ENCODE measurements at regions of chr1 and their contacts with region 1.

Region 1: DNA sequence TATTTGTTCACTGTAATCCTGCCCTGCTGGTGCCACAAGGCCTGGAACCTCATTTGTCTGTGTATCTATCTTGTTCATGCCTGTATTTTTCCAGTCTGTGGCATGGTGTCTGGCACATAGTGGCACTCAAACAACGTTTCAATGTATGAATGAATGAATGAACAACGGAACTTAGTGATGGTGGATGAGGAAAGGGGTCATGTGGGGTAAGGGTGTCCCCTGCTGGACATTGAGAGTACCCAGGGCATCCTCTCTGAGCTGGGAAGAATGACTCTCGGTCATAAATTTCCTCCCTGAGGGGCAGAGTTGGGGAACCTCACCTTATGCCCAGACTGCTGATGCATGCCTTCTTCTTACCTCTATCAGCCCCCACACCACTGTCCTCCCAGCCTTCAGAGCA is 18.9 kb upstream of the ZNF683 start:
- DNase-seq: peak; percentile 64
- ATAC-seq: peak; percentile 75
- H3K4me3 ChIP-seq: no peak overlapping the region
- H3K27ac ChIP-seq: no peak overlapping the region
- H3K4me1 ChIP-seq: peaks cover 17 to 23% of the 10 kb centered on the region in 2 experiments
- H3K27me3 ChIP-seq: peaks cover 14% of the 10 kb centered on the region; the same call in 1 of the 2 replicates
- CTCF ChIP-seq: peak; percentile 90 to 92 (median 91)
- POLR2A ChIP-seq: no peak
- RAD21 ChIP-seq: peak; percentile 99

Region 2: GRCh38 chr1:26035959-26036755 is 355.3 kb before region 1 on chr1:
- CTCF ChIA-PET with region 1: interaction called, 3 read pairs
- POLR2A ChIA-PET with region 1: no interaction called
- RAD21 ChIA-PET with region 1: interaction called in 1 of 2 experiments, 3 read pairs
- intact Hi-C with region 1: loop called (anchors 5 kb)
- DNase-seq: peak; percentile 26
- ATAC-seq: peak; percentile 85
- H3K4me3 ChIP-seq: peak overlapping the region; percentile 91 to 98
- H3K27ac ChIP-seq: peak overlapping the region; percentile 73; the same call in 1 of the 2 replicates
- H3K4me1 ChIP-seq: peaks cover 11 to 27% of the 10 kb centered on the region in 2 experiments
- H3K27me3 ChIP-seq: no peaks in the 10 kb centered on the region
- CTCF ChIP-seq: peak; percentile 86 to 98 (median 96)
- POLR2A ChIP-seq: no peak
- RAD21 ChIP-seq: peak; percentile 95

Region 3: DNA sequence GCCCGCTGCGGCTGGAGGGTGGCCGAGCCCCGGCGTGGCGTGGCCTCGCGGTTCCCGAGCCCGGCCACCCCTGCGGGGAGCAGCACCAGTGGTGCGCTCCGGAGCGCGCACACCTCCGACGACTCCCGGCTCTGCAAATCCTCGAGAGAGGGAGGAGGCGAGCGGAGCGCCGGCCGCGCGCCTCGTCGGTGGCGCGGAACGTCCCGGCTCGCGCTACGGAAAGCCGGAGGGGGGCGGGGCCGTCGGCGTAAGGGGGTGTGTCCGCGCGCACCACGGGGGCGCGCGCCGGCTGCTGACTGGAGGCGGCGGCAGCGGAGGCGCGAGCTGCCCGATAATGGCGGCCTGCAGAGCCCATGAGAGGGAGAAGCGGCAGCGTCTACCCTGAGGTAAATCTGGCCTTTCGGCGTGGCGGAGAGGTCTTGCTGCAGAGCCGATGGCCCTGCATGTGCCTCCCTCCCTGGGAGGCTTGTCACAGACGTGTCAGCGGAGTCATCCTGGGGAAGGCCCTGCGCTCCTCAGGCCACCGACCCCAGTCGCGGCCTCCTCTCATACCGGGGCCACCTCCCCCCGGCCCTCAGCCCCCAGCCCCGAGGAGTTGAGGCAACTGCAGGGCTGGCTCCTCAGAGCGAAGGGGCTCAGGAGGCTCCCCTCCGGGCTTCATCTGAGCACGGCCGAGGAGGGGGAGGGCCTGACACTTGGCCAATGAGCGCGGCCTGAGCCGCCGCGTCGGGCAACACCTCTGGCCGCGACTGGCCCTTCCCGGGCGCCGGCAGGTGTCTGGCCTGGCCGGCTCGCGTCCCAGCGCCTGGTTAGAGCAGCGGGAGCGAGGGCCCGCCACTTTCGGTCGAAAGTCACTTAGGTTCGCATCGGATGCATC is 279.7 kb before region 1 on chr1 and contains the start of gene PDIK1L:
- CTCF ChIA-PET with region 1: interaction called, 3 read pairs
- POLR2A ChIA-PET with region 1: no interaction called
- RAD21 ChIA-PET with region 1: interaction called in 1 of 2 experiments, 3 read pairs
- intact Hi-C with region 1: loop called (anchors 2 kb)
- DNase-seq: peak; percentile 93
- ATAC-seq: peak; percentile 84
- H3K4me3 ChIP-seq: peak within 1 kb of the TSS; percentile 94 to 98
- H3K27ac ChIP-seq: peak within 1 kb of the TSS; percentile 89
- H3K4me1 ChIP-seq: peaks cover 14 to 21% of the 10 kb centered on the region in 2 experiments
- H3K27me3 ChIP-seq: no peaks in the 10 kb centered on the region
- CTCF ChIP-seq: no peak
- POLR2A ChIP-seq: peak; percentile 43
- RAD21 ChIP-seq: no peak
- total RNA-seq, gene PDIK1L: 8.8 TPM

Region 4: GRCh38 chr1:26169669-26170471 is 221.6 kb before region 1 on chr1 and contains the start of gene ZNF593:
- CTCF ChIA-PET with region 1: interaction called, 9 read pairs
- POLR2A ChIA-PET with region 1: interaction called, 6 read pairs
- RAD21 ChIA-PET with region 1: no interaction called
- intact Hi-C with region 1: loop called (anchors 5 kb)
- DNase-seq: peak; percentile 86
- ATAC-seq: peak; percentile 92
- H3K4me3 ChIP-seq: peak within 1 kb of the TSS; percentile 89 to 96
- H3K27ac ChIP-seq: peak within 1 kb of the TSS; percentile 74
- H3K4me1 ChIP-seq: peaks cover 4 to 22% of the 10 kb centered on the region in 2 experiments; a peak in 3 of 4 replicates
- H3K27me3 ChIP-seq: no peaks in the 10 kb centered on the region
- CTCF ChIP-seq: peak; percentile 80 to 84 (median 81)
- POLR2A ChIP-seq: no peak
- RAD21 ChIP-seq: peak; percentile 59
- total RNA-seq, gene ZNF593: 62.4 TPM

Region 5: DNA sequence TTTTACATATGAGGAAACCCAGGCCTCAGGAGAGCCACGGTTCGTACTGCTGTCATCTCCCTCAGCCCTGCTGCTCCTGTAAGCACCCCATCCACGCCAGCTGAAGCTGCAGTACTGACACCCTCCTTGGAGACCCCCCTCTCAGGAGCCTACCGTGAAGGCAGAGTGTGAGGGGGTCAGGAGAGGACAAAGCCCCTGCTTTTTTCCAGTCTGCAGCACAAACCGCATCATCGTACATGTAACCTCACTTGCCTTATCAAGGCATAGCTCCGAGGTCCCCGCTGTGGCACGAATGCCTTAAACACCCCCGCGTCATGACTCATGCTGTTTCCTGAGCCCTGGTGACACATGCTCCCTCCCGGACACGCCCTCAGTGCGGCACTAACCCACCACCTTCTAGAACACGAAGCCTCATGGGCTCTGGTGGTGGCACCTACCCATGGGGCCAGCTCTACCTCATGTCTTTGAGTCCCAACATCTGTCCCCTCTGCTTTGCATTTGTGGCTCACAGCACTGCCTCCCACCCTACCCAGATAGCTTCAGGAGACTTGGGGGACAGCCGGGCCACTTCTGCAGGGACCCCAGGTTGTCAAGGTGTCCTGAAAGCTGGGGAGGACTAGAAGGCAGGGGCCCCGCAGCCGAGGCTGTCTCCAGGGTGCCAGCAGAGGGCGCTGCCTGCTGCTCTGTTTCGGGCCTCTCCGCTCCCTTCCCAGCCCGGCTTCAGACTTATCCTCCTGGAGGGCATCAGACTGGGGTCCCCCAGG is 106.7 kb before region 1 on chr1:
- CTCF ChIA-PET with region 1: interaction called, 34 read pairs
- POLR2A ChIA-PET with region 1: no interaction called
- RAD21 ChIA-PET with region 1: interaction called, 4 to 11 read pairs
- intact Hi-C with region 1: loop called (anchors 1 kb)
- DNase-seq: peak; percentile 91
- ATAC-seq: peak; percentile 68
- H3K4me3 ChIP-seq: peak overlapping the region in 1 of 2 experiments; percentile 31; a peak in 2 of 4 replicates
- H3K27ac ChIP-seq: peak overlapping the region; percentile 58
- H3K4me1 ChIP-seq: peaks cover 25 to 67% of the 10 kb centered on the region in 2 experiments
- H3K27me3 ChIP-seq: no peaks in the 10 kb centered on the region
- CTCF ChIP-seq: peak in 2 of 3 experiments; percentile 87; a peak in 4 of 6 replicates
- POLR2A ChIP-seq: no peak
- RAD21 ChIP-seq: no peak

Region 6: DNA sequence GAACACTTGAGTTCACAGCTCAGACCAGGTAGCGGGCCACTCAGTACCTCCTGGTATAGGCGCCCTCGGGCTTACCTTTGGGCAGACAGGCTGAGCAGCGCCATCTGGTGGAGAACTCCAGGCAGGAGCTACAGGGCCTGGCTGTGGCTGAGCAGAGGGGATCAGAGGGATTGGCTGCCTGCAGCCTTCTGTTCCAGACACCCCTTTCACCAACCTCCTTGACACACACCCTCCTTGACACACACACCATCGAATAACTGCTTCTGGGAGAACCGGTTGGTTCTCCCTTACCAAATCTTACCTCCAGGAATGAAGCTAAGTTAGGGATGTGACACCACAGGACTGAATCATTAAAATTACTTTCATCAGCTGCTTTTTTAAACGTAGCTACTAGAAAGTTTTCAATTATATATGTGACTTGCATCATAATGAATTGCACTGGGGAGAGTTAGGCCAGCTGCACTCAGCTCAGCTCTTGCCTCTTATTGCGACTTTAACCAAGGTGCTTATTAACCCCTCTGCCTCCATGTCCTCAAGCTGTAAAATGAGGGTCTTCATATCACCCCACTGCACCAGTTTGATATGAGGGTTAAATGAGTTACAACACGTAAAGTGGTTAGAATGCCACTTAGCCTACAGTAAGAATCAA is 25.8 kb after region 1 on chr1:
- CTCF ChIA-PET with region 1: interaction called, 20 read pairs
- POLR2A ChIA-PET with region 1: no interaction called
- RAD21 ChIA-PET with region 1: interaction called in 1 of 2 experiments, 3 read pairs
- intact Hi-C with region 1: no loop called
- DNase-seq: peak; percentile 80
- ATAC-seq: peak; percentile 100
- H3K4me3 ChIP-seq: no peak overlapping the region
- H3K27ac ChIP-seq: no peak overlapping the region
- H3K4me1 ChIP-seq: peaks cover 0 to 19% of the 10 kb centered on the region in 2 experiments; a peak in 2 of 4 replicates
- H3K27me3 ChIP-seq: no peaks in the 10 kb centered on the region; the same call in 1 of the 2 replicates
- CTCF ChIP-seq: peak; percentile 76 to 95 (median 89)
- POLR2A ChIP-seq: no peak
- RAD21 ChIP-seq: peak; percentile 84